ENCODE measurements at regions of chr5 and their contacts with region 1.

Region 1: DNA sequence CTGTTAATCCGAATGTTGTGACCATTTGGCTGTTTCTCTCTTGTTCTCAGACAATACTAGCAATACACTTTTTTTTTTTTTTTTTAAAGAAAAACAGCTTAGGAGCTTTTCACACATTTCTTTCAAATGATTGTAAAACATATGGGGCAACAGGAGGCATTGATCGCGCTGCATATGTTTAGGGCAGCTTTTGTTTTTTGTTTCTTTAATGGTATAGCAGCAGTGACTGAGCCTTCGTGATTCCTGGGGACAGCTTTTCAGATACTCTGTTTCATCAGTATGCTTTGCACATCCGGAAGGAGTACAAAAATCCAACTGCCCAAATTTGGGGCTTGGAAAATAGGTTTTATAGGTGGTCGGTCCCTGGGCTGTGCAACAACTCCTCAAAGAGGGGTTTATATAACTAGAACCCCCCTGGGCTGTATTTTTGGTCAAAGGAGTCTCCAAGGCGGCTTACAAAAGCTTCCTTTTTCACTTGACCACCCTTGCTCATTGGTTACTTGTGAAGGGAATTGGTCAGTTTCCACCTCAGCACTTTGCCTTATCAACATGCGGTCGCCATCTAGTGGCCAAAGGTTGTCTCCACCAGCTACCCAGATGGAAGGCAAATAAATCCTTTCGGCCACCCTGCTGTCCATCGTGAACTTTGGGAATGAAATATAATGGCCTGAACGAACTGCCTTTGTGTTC is 91.8 kb downstream of the PDE6A start:
- DNase-seq: peak; percentile 56 to 81
- H3K4me3 ChIP-seq: no peak overlapping the region
- H3K27ac ChIP-seq: no peak overlapping the region
- H3K4me1 ChIP-seq: peaks cover 0 to 2% (median 0%) of the 10 kb centered on the region in 4 experiments; a peak in 1 of 7 replicates
- H3K27me3 ChIP-seq: no peaks in the 10 kb centered on the region
- CTCF ChIP-seq: peak; percentile 79 to 96 (median 84)
- EP300 ChIP-seq: no peak
- POLR2A ChIP-seq: no peak
- RAD21 ChIP-seq: peak; percentile 67 to 83

Region 2: DNA sequence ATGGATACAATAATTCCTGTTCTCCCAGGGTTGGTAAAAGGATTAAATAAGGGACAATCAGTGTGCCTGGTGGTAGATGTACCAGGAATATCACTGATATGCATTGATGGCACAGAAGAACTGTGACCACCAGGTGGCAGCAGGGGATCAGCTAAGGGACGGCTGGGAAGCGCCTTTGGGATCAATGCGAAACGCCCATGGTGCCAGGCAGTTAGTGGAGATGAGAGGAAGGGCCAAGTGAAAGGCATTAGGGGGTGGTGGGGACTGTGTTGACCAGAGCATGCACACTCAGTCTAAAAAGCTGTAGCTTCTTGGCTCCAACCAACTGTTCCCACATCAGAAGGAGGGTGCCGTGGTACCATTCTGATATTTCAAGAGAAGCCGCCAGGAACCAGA is 215.9 kb before region 1 on chr5:
- CTCF ChIA-PET with region 1: interaction called, 470 read pairs
- POLR2A ChIA-PET with region 1: interaction called, 3 read pairs
- DNase-seq: peak; percentile 49 to 83
- H3K4me3 ChIP-seq: no peak overlapping the region
- H3K27ac ChIP-seq: no peak overlapping the region
- H3K4me1 ChIP-seq: peaks cover 12 to 16% (median 12%) of the 10 kb centered on the region in 4 experiments
- H3K27me3 ChIP-seq: no peaks in the 10 kb centered on the region; a peak in 1 of 7 replicates
- CTCF ChIP-seq: peak; percentile 85 to 93 (median 91)
- EP300 ChIP-seq: no peak
- POLR2A ChIP-seq: no peak
- RAD21 ChIP-seq: peak; percentile 97 to 98

Region 3: DNA sequence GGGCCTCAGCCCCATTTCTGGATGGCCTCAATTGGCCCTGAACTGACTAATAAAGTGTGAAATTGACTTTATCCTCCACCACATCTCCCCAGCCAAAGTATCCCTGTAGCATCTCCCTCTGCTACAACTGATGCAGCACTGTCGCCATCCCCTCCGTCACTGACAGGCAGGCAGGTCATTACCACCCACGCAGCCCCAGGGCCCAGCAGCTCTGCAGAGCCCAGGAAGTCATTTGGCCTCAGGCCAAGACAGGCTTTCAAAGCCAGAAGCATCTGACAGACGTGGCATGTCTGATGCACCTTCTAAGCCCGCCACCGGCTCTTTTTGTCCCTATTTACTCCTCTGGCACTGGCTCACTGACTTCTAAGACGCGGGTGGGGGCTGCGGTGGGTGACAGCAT is 206.2 kb before region 1 on chr5:
- CTCF ChIA-PET with region 1: interaction called, 470 read pairs
- POLR2A ChIA-PET with region 1: no interaction called
- DNase-seq: no peak
- H3K4me3 ChIP-seq: no peak overlapping the region
- H3K27ac ChIP-seq: no peak overlapping the region
- H3K4me1 ChIP-seq: no peaks in the 10 kb centered on the region
- H3K27me3 ChIP-seq: no peaks in the 10 kb centered on the region
- CTCF ChIP-seq: no peak
- EP300 ChIP-seq: no peak
- POLR2A ChIP-seq: no peak
- RAD21 ChIP-seq: no peak

Region 4: DNA sequence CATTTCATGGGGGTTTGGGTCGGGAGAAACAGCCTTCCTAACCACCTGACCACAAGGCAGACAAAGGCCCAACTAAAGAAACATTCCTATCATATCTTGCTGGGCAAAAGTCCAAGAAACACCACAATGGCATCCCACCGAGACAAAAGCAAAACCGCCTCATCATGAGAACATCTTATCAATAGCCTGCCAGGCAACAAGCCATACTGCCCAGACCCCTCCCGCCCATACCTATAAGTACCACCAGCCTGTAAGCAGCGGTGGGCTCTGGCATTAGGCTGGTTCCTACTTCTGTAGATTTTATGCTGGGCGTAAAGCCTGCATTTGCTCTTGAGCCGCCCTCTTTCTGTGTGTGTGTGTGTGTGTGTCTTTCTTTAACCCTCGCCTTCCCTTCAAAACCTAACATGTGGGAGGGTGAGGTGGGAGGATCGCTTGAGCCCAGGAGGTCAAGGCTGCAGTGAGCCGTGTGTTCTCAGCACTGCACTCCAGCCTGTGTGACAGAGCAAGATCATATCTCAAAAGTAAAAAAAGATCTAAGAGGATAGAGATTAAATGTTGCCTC is 34.9 kb after region 1 on chr5:
- CTCF ChIA-PET with region 1: no interaction called
- POLR2A ChIA-PET with region 1: no interaction called
- DNase-seq: no peak
- H3K4me3 ChIP-seq: no peak overlapping the region
- H3K27ac ChIP-seq: no peak overlapping the region
- H3K4me1 ChIP-seq: no peaks in the 10 kb centered on the region
- H3K27me3 ChIP-seq: no peaks in the 10 kb centered on the region
- CTCF ChIP-seq: no peak
- EP300 ChIP-seq: no peak
- POLR2A ChIP-seq: no peak
- RAD21 ChIP-seq: no peak

Region 5: GRCh38 chr5:149932445-149933350 is 79.9 kb after region 1 on chr5:
- CTCF ChIA-PET with region 1: interaction called, 10 read pairs
- POLR2A ChIA-PET with region 1: no interaction called
- DNase-seq: peak in 1 of 2 experiments; percentile 72
- H3K4me3 ChIP-seq: no peak overlapping the region
- H3K27ac ChIP-seq: no peak overlapping the region
- H3K4me1 ChIP-seq: peaks cover 0 to 3% (median 0%) of the 10 kb centered on the region in 4 experiments; a peak in 1 of 7 replicates
- H3K27me3 ChIP-seq: no peaks in the 10 kb centered on the region; a peak in 2 of 7 replicates
- CTCF ChIP-seq: peak; percentile 60 to 75 (median 67)
- EP300 ChIP-seq: no peak
- POLR2A ChIP-seq: no peak
- RAD21 ChIP-seq: peak; percentile 22 to 49